Mammary epithelial cell (primary cell): ENCODE measurements at regions of chr16 and their contacts with region 1.

Region 1: DNA sequence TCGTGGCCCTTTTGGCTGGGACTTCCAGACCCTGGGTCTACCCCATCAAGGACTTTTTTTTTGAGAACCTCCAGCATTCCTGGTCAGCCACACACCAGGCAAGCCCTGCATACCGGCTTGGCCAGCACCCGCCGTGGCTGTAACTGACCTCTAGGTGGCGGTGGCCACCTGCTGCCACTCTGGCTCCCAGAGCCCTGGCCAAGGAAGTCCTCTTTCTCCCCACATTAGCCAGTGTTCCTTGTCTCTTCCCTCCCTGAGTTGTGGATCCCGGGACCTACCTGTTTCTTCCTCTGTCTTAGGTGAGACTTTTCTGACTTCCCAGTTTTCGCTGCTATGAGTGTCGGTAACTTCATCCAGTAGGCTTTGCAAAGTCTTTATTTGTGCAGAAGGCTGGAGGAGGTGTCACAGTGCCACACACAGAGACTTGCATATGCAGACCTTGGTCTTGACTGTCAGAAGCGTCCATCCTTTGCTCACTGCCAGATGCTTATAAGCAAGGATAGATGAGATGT is 348.3 kb downstream of the CPPED1 start:
- DNase-seq: peak; percentile 35
- H3K4me3 ChIP-seq: no peak overlapping the region
- H3K27ac ChIP-seq: no peak overlapping the region
- H3K4me1 ChIP-seq: no peaks in the 10 kb centered on the region
- H3K27me3 ChIP-seq: no peaks in the 10 kb centered on the region
- CTCF ChIP-seq: peak; percentile 73 to 85

Region 2: DNA sequence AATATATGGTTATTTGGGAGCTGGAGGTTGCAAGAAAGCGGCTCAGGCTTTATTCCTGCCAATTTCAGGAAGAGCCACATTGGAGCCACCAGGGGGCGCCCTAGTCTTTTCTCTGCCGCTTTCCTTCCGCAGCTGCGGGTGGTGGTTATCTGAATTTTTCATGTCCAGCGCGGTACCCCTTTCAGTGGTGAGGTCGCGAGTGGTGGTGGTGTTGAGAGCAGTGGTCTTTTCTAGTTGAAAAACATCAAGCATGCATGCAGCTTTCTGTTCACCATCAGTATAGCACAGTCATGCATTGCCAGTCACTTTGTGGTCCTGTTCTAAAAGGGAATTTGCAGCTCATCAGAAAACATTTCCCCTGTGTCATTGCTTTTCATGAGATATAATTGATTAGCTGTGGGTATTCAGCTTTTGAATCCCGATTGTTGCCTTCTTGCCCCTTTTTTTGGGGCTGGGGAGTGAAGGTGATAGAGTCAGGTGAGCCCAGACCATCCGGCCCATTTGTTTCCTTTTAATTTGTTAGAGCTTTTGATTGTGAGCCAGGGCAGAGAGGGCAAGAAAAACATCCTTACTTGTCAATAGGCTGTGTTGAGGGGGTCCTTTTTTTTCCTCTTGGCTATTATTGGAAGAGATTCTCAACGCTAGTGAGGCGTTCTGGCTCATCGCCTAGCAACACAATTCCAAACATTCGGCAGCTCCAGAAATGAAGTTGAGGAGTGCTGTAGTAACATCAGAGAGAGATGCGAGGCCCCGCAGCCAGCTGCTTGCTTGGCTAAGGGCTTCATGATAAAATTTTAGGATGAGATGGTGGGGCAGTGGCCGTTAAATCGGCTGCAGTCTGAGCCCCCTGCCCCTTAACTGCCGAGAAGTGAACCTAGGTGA is 359.8 kb before region 1 on chr16:
- CTCF ChIA-PET with region 1: no interaction called
- dilution Hi-C with region 1: no loop called
- in situ Hi-C with region 1: no loop called
- intact Hi-C with region 1: loop called (anchors 1 kb)
- DNase-seq: peak; percentile 10
- H3K4me3 ChIP-seq: no peak overlapping the region
- H3K27ac ChIP-seq: no peak overlapping the region
- H3K4me1 ChIP-seq: no peaks in the 10 kb centered on the region
- H3K27me3 ChIP-seq: no peaks in the 10 kb centered on the region
- CTCF ChIP-seq: peak; percentile 87

Region 3: DNA sequence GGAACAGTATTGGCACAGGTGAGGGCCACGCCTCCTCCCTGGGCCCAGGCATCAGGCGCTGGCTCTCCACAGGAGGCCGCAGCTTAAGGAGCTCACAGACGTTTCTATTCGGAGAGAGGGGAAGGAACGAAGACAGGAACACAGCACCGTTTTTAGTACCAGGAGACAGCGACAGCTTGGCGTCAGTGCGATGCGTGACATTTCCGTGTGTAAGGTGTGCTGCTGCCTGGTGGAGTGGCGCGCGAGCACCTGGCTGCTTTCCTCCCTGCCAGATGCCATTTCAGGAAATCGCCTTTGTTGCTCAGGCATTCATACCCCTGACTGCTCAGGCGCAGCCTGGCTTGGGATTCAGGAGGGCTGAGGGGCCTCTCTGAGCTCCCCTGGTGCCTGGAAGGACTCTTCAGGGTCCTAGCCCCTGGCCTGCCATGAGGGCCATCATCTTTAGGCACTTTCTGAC is 19.1 kb before region 1 on chr16:
- CTCF ChIA-PET with region 1: no interaction called
- dilution Hi-C with region 1: no loop called
- in situ Hi-C with region 1: no loop called
- intact Hi-C with region 1: no loop called
- DNase-seq: no peak
- H3K4me3 ChIP-seq: no peak overlapping the region
- H3K27ac ChIP-seq: no peak overlapping the region
- H3K4me1 ChIP-seq: no peaks in the 10 kb centered on the region
- H3K27me3 ChIP-seq: no peaks in the 10 kb centered on the region
- CTCF ChIP-seq: no peak

Region 4: DNA sequence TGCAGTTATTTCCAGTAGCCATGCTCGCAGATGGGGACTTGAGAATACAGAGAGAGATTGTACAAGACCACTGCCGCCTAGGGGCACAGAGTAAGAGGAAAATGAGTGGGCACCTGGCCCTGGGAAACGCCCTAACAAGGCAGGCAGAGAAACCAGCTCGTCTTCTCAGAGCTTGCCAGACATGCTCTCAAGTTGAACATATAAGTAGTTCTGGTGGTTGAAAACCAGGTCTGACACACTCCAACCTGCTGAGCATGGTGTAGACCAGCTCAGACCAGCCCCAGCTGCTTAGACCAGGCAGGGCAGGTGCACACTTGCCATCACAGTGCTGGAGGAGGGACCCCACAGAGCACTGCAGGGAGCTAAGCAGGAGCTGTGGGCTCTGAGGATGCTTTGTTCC is 97.8 kb after region 1 on chr16:
- CTCF ChIA-PET with region 1: no interaction called
- dilution Hi-C with region 1: no loop called
- in situ Hi-C with region 1: no loop called
- intact Hi-C with region 1: loop called (anchors 10 kb)
- DNase-seq: peak; percentile 3
- H3K4me3 ChIP-seq: no peak overlapping the region
- H3K27ac ChIP-seq: no peak overlapping the region
- H3K4me1 ChIP-seq: no peaks in the 10 kb centered on the region
- H3K27me3 ChIP-seq: no peaks in the 10 kb centered on the region
- CTCF ChIP-seq: no peak

Region 5: GRCh38 chr16:12803203-12804097 is 348.1 kb after region 1 on chr16 and contains the start of gene CPPED1:
- CTCF ChIA-PET with region 1: no interaction called
- dilution Hi-C with region 1: no loop called
- in situ Hi-C with region 1: loop called in 1 of 2 experiments (anchors 25 kb)
- intact Hi-C with region 1: no loop called
- DNase-seq: peak; percentile 94
- H3K4me3 ChIP-seq: peak within 1 kb of the TSS; percentile 46 to 82 (median 73)
- H3K27ac ChIP-seq: peak within 1 kb of the TSS; percentile 45
- H3K4me1 ChIP-seq: peaks cover 9% of the 10 kb centered on the region
- H3K27me3 ChIP-seq: no peaks in the 10 kb centered on the region
- CTCF ChIP-seq: no peak
- total RNA-seq, gene CPPED1: 12.8 to 19.9 TPM

Region 6: GRCh38 chr16:12896562-12896961 is 441.2 kb after region 1 on chr16:
- CTCF ChIA-PET with region 1: no interaction called
- dilution Hi-C with region 1: no loop called
- in situ Hi-C with region 1: no loop called
- intact Hi-C with region 1: loop called (anchors 5 kb)
- DNase-seq: peak; percentile 61
- H3K4me3 ChIP-seq: no peak overlapping the region
- H3K27ac ChIP-seq: no peak overlapping the region
- H3K4me1 ChIP-seq: peaks cover 19% of the 10 kb centered on the region
- H3K27me3 ChIP-seq: no peaks in the 10 kb centered on the region
- CTCF ChIP-seq: peak; percentile 64 to 84